ENCODE measurements at regions of chr1 and their contacts with region 1.

Region 1: GRCh38 chr1:205141236-205142101 is 19.7 kb upstream of the RBBP5 start:
- DNase-seq: peak; percentile 75
- CTCF ChIP-seq: peak; percentile 68

Region 2: DNA sequence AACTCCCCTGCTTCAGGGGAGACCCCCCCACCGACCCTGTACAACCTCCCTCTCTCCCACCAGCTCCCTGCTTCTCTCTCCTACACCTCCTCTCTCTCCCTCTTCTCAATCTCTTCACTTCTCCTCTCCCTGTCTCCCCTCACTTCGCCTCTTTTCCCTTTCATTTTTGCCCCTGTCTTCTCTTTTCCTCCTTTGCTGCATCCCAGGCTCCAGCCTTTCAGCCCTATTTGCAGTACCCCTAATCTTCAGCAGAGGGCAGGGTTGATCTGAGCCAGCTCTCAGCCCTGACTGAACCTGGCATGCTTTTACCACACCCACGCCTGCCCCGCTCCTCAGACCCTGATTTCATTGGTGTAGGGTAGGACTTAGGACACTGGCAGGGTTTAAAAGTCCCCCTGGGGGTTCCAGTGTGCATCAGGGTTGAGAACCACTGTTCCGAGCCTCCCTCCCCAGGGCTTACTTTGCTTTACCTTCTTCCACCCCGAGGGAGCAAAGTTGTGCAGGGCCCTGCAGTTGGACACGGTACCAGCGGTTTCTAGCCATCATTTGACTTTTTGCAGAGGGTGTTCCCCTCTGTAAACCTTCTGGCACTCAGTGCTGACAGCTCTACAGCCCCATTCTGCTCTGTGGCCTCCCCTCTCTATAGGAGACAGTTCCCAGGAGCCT is 165.8 kb before region 1 on chr1:
- CTCF ChIA-PET with region 1: interaction called, 14 read pairs
- POLR2A ChIA-PET with region 1: no interaction called
- DNase-seq: peak; percentile 83
- CTCF ChIP-seq: peak; percentile 92

Region 3: GRCh38 chr1:205111354-205111753 is 30.1 kb before region 1 on chr1:
- CTCF ChIA-PET with region 1: interaction called, 19 read pairs
- POLR2A ChIA-PET with region 1: no interaction called
- DNase-seq: no peak
- CTCF ChIP-seq: no peak

Region 4: DNA sequence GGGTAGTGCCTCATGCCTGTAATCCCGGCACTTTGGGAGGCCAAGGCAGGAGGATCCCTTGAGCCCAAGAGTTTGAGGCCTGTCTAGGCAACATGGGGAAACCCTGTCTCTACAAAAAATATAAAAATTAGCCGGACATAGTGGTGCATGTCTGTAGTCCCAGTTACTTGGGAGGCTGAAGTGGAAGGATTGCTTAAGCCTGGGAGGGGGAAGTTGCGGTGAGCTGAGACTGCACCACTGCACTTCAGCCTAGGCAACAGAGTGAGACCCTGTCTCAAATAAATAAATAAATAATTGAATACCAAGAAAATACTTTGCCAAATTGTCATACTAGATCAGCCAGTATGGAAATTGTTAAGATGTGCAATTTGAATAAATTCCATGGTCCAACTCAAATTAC is 13.8 kb before region 1 on chr1:
- CTCF ChIA-PET with region 1: interaction called, 33 read pairs
- POLR2A ChIA-PET with region 1: no interaction called
- DNase-seq: no peak
- CTCF ChIP-seq: no peak

Region 5: GRCh38 chr1:205172729-205173366 is 31.4 kb after region 1 on chr1:
- CTCF ChIA-PET with region 1: interaction called, 11 read pairs
- POLR2A ChIA-PET with region 1: no interaction called
- DNase-seq: no peak
- CTCF ChIP-seq: no peak

Region 6: DNA sequence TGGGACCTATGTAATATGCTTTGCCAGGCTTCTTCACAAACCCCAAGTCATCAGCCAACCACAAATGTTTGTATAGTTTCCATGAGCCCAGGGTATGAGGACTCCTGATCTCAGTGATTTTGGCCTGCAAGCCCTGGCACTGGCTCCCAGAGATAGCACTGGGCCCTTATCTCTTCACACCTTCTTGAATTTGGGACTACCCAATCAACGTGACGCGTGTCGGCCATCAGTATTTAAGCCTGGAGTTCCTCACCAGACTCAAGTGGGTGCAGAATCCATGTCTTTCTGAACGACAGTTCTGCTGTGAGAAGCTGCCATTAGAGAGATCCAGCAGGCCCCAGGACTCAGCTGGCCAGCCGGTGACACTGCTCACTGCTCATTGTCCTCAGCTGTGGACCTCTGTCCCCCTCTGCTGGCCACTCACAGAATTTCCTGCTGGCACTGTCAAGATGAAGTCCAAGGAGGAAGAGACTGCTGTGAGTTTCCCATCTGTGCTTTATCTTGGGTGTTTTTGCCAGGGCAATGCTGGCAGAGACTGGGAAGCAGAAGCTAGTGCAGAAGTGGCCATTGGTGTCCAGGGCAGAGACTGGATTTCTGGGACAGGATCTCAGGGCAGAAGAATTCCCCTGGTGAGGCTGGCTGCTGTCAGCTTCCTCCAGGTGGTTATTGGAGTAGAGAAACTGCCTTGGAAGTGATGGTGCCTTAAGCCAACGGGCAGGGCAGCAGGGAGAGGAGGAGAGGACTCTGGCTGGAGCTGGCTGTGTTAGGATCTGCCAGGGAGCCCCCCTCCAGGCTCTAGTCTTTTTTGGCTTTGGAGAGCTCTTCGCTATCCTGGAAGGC is 114.7 kb after region 1 on chr1:
- CTCF ChIA-PET with region 1: interaction called, 33 read pairs
- POLR2A ChIA-PET with region 1: no interaction called
- DNase-seq: peak; percentile 83
- CTCF ChIP-seq: peak; percentile 93

Measured in GM10248 (cell line).